ENCODE measurements at regions of chr2 and their contacts with region 1.

Region 1: GRCh38 chr2:27086090-27086723 is 365 bp upstream of the KHK start:
- DNase-seq: peak; percentile 98
- ATAC-seq: peak; percentile 92

Region 2: DNA sequence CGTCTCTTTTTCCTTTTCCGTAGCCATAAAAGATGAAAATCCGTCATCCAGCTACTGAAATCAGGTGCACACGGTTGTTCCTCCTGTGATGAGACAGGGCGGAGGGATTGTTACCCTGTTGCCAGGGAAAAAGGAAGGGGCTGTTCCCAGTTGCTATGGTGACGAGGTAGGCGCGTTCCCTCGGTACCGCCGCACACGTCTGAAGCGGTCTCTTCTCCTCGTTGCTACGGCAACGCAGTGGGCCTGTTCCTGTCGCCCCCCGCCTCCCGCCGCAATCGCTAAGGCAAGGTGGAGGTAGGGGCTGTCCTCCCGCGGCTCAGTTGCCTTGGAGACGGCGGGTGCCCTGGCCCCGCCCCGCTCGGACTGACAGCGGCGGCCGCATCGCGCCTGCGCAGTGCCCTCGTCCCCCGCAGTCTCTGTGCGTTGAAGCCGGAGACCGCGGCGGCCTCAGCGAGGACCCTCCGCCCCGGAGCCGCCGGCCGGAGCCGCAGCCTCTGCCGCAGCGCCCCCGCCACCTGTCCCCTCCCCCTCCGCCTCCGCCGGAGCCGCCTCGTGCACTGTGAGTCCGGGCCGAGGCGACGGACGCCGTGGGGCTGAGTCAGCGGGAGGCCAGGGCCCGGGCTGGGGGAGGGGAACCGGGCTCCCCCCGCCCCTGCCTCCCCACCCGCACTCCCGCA is 115.8 kb before region 1 on chr2 and contains the start of gene MAPRE3:
- intact Hi-C with region 1: loop called (anchors 2 kb)
- DNase-seq: peak; percentile 90
- ATAC-seq: peak; percentile 97
- total RNA-seq, gene MAPRE3: 57.9 TPM

Region 3: DNA sequence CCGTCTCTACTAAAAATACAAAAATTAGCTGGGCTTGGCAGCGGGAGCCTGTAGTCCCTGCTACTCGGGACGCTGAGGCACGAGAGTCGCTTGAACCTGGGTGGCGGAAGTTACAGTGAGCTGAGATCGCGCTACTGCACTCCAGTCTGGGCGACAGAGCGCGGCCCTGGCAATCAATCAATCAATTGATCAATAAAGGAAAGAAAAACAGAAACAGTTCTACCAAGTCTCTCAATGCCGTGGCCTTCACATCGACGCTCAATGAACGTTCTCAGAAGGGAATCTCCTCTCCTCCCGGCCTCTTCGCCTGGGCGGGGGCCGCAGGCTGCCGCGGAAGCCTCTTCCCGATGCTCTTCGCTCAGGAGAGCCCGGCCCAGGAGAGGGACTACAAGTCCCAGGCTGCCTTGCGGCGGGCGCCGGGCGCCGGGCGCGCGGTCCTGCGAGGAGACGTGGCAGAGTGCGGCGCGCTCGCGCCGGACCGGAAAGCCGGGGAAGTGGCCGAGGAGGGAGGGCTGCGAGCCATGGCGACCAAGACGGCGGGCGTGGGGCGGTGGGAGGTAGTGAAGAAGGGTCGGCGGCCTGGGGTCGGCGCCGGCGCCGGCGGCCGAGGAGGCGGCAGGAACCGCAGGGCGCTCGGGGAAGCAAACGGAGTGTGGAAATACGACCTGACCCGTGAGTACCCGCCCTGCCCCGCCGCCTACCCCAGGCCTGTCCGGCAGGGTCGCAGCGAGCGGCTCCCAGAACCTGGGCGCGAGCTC is 53.5 kb before region 1 on chr2 and contains the start of gene TMEM214:
- intact Hi-C with region 1: loop called (anchors 10 kb)
- DNase-seq: peak; percentile 95
- ATAC-seq: peak; percentile 100
- total RNA-seq, gene TMEM214: 28.2 TPM

Region 4: GRCh38 chr2:27191053-27191829 is 105.0 kb after region 1 on chr2:
- intact Hi-C with region 1: no loop called
- DNase-seq: no peak
- ATAC-seq: peak; percentile 85

Measured in Right ventricle myocardium superior (tissue), 1 donor.